WTC11 (cell line): ENCODE measurements at regions of chr6 and their contacts with region 1.

Region 1: DNA sequence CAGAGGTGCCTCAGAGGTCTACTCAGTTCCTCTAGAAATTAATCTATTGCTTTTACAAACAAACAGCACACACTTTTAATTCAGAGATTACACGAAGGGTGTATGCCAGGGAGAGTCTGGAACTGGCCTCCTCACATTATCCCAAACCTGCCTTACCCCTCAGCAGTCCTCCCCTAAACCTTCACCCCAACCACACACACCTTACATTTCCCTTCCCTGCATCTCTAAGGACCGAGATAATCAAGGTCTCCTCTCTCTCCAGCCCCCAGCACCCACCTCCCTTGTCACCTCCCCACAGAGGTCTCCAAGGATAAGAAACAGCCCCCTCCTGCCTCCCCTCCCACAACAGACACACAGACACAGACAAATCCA is 6.1 kb downstream of the HLA-DRB1 start:
- DNase-seq: no peak
- ATAC-seq: no peak; the same call in 1 of the 2 replicates
- H3K4me3 Mint-ChIP-seq: peak overlapping the region; percentile 82
- H3K27ac Mint-ChIP-seq: no peak overlapping the region
- H3K4me1 Mint-ChIP-seq: 0 out of 2 replicates have a peak, but pooled peaks cover 4% of the 10 kb centered on the region
- H3K27me3 Mint-ChIP-seq: peaks cover 28% of the 10 kb centered on the region
- CTCF ChIP-seq: no peak

Region 2: DNA sequence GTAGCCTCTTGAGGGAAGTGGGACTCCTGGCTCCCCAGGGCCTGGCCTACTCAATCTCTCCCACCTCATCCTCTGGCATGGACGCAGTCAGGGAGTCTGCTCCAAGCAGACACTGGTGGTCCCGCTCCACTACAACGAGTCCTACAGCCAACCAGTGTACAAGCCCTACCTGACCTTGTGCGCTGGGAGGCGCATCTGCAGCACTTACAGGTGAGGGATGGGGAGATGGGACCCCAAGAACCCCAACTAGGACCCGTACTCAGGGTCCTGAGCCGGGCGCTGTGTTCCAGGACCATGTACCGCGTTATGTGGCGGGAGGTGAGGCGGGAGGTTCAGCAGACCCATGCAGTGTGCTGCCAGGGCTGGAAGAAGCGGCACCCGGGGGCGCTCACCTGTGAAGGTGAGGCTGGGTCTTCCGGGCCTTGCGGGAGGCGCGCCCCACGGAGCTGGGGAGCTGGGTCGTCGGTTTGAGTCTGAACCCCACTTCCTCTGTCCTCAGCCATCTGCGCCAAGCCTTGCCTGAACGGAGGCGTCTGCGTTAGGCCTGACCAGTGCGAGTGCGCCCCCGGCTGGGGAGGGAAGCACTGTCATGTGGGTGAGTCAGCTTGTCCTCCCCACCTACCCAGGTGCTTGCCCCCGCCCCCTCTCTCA is 417.0 kb before region 1 on chr6:
- CTCF ChIA-PET with region 1: no interaction called
- POLR2A ChIA-PET with region 1: no interaction called
- DNase-seq: peak; percentile 88
- ATAC-seq: peak; percentile 93
- H3K4me3 Mint-ChIP-seq: no peak overlapping the region
- H3K27ac Mint-ChIP-seq: no peak overlapping the region
- H3K4me1 Mint-ChIP-seq: peaks cover 11% of the 10 kb centered on the region
- H3K27me3 Mint-ChIP-seq: no peaks in the 10 kb centered on the region
- CTCF ChIP-seq: no peak

Region 3: DNA sequence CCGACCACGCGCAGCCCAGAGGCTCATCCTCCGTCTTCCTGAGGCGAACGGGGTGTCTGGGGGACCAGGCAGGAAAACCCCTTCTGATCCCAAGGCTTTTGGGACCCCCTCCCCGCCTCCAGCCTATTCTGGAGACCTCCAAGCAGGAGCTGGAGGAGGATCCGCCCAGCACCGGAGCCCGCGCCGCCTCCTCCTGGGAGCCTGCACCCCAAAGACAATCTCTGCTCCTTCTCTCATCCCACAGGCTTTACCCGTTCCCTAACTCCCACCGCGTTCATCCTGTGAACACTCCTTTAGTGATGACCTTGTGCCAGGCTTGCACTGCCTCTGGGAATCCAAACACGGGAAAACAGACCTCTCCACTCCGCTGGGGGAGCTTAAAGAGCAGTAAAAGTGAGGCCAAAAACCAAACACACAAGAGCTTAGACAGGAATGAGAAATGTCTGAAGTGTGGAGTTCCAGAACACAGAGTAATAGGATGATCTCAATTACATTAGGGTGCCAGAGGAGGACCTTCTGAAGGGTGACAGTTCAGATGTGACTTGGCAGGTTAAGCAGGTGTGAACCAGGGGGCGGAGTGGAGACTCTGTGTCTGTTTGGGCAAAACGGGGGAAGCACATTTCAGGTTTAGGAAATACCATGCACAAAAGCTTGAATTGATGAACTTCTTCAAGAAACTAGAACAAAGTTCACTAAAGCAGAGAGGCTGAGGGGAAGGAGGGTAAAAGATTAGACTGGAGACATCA is 61.0 kb before region 1 on chr6:
- CTCF ChIA-PET with region 1: interaction called, 13 read pairs
- POLR2A ChIA-PET with region 1: no interaction called
- DNase-seq: no peak
- ATAC-seq: no peak
- H3K4me3 Mint-ChIP-seq: peak overlapping the region; percentile 75; the same call in 1 of the 2 replicates
- H3K27ac Mint-ChIP-seq: no peak overlapping the region
- H3K4me1 Mint-ChIP-seq: no peaks in the 10 kb centered on the region
- H3K27me3 Mint-ChIP-seq: peaks cover 42% of the 10 kb centered on the region
- CTCF ChIP-seq: no peak

Region 4: GRCh38 chr6:32558426-32559057 is 25.0 kb before region 1 on chr6:
- CTCF ChIA-PET with region 1: interaction called, 10 read pairs
- POLR2A ChIA-PET with region 1: no interaction called
- DNase-seq: no peak
- ATAC-seq: peak; percentile 65
- H3K4me3 Mint-ChIP-seq: peak overlapping the region; percentile 65
- H3K27ac Mint-ChIP-seq: no peak overlapping the region
- H3K4me1 Mint-ChIP-seq: peaks cover 5% of the 10 kb centered on the region; the same call in 1 of the 2 replicates
- H3K27me3 Mint-ChIP-seq: peaks cover 12% of the 10 kb centered on the region
- CTCF ChIP-seq: no peak

Region 5: DNA sequence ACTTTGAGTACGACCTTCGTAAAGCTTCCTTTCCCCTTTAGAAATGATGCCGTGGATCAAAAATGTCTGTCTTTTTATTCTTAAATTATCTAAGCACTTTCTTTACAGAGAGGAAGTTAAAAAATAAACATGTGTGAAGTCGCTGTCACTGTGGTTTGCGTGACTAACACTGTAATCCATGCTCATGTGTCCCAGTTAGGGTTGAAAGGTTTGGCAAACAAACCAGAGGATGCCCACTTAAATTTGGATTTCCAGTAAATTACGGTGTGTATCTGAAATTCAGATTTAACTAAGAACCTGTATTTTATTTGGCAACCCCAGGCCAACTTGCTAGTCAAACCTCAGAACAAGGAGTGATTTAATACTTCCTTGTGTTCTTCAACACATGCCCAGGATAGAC is 15.0 kb before region 1 on chr6:
- CTCF ChIA-PET with region 1: no interaction called
- POLR2A ChIA-PET with region 1: no interaction called
- DNase-seq: no peak
- ATAC-seq: no peak
- H3K4me3 Mint-ChIP-seq: no peak overlapping the region
- H3K27ac Mint-ChIP-seq: no peak overlapping the region
- H3K4me1 Mint-ChIP-seq: no peaks in the 10 kb centered on the region
- H3K27me3 Mint-ChIP-seq: no peaks in the 10 kb centered on the region; the same call in 1 of the 2 replicates
- CTCF ChIP-seq: no peak

Region 6: GRCh38 chr6:32604434-32604877 is 20.9 kb after region 1 on chr6:
- CTCF ChIA-PET with region 1: no interaction called
- POLR2A ChIA-PET with region 1: no interaction called
- DNase-seq: no peak
- ATAC-seq: no peak
- H3K4me3 Mint-ChIP-seq: no peak overlapping the region
- H3K27ac Mint-ChIP-seq: no peak overlapping the region
- H3K4me1 Mint-ChIP-seq: no peaks in the 10 kb centered on the region
- H3K27me3 Mint-ChIP-seq: peaks cover 18% of the 10 kb centered on the region
- CTCF ChIP-seq: no peak